Thyroid gland (tissue), 4 donors: ENCODE measurements at regions of chr10 and their contacts with region 1.

Region 1: DNA sequence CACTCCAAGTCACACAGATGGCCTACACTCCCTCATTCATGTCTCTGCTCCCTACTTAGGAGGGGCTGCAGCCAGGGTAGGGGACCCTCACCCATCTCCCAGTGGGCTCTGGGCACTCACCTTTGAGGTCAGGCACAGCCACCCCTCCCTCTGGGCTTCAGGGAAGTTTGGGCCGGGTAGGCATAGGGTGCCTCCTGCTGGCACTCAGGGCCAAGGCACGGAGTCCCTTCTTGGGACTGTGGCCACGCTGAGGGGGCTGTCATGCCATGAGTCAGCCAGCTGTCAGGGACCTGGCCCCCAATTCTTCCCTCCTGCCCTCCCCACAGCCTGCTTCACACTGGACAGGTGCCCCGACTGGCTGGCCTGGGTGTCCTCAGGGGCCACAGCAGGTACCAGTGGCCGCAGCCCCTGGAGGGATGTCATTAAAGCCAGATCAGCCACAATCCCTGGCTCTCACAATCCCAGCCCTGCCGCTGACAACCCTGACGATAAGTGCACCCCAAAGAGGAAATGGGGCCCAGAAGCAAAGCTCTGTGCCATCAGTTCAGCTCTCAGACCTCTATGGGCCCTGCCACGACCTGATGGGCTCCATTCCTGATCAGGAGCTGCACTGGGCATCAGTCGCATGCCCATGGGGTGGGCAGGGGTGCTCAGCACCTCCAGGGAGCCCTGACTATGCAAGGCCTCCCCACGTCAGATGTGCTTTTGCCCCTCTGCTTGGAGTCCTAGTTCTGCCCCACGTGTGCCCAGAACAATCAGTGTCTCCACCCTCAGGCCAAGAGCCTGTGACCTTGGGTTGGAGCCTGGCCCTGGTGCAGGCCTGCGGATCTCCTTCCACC is 34.1 kb upstream of the RET start:
- DNase-seq: no peak
- H3K4me3 ChIP-seq: no peak overlapping the region
- H3K27ac ChIP-seq: no peak overlapping the region
- H3K4me1 ChIP-seq: no peaks in the 10 kb centered on the region
- H3K27me3 ChIP-seq: no peaks in the 10 kb centered on the region
- CTCF ChIP-seq: no peak
- POLR2A ChIP-seq: no peak

Region 2: GRCh38 chr10:43026011-43026973 is 16.4 kb before region 1 on chr10:
- intact Hi-C with region 1: loop called (anchors 2 kb)
- DNase-seq: peak; percentile 35 to 51
- H3K4me3 ChIP-seq: no peak overlapping the region
- H3K27ac ChIP-seq: no peak overlapping the region
- H3K4me1 ChIP-seq: no peaks in the 10 kb centered on the region
- H3K27me3 ChIP-seq: no peaks in the 10 kb centered on the region
- CTCF ChIP-seq: no peak
- POLR2A ChIP-seq: no peak